Heart left ventricle (tissue), 16 donors: ENCODE measurements at regions of chr4 and their contacts with region 1.

Region 1: DNA sequence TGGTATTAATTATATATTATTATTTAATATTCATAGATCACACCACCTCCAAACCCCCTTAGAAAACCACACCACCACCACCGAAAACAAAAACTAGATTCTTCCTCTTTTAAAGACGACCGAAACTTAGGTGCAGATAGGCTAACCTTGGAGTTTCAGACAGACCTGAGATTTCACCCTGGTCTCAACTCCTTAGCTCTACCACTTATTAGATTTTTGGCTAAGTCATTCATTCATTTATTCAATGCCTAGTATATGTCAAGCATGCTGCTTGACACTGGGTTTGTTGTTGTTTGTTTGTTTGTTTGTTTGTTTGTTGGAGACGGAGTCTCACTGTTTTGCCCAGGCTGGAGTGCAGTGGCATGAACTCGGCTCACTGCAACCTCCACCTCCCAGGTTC is 9.5 kb upstream of the BMP2K start:
- DNase-seq: no peak
- ATAC-seq: no peak
- H3K4me3 ChIP-seq: no peak overlapping the region
- H3K27ac ChIP-seq: no peak overlapping the region
- H3K4me1 ChIP-seq: peaks cover 0 to 15% (median 5%) of the 10 kb centered on the region in 12 donors
- H3K27me3 ChIP-seq: no peaks in the 10 kb centered on the region
- CTCF ChIP-seq: no peak
- POLR2A ChIP-seq: no peak

Region 2: GRCh38 chr4:78622253-78622979 is 144.2 kb before region 1 on chr4:
- intact Hi-C with region 1: loop called in 2 of 10 experiments (anchors 5 to 10 kb)
- DNase-seq: no peak
- ATAC-seq: peak in 1 of 4 donors; percentile 39
- H3K4me3 ChIP-seq: no peak overlapping the region
- H3K27ac ChIP-seq: no peak overlapping the region
- H3K4me1 ChIP-seq: peaks cover 0 to 6% (median 0%) of the 10 kb centered on the region in 12 donors
- H3K27me3 ChIP-seq: no peaks in the 10 kb centered on the region
- CTCF ChIP-seq: no peak
- POLR2A ChIP-seq: no peak

Region 3: DNA sequence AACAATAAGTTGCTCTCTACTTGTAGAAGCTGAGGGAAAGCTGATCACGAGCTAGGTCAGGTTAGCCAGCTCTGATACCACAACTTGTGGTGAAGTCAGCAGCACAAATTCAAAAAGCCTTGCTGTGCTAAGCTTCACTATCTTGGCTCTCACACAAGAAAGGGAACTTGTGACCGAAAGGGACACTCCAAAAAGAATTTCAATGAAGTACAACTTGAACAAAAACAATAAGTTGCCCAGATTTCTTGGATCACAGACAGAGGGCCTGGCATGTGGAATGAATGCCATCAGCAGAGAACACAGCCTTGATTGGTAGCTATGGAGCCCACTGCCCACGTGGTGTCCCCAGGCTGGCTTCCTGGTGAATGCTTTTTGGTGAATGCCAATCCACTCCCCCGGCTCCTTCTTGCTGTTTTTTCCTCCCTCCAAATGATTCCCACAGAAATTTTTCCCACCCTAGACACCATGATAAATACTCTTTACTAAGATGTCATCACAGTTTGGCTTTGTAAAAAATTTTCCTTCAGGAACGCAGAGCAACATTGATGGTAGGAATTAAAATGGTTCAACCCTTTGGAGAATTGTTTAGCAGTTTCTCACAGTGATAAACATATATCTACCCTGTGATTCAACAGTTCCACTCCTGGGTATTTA is 132.5 kb before region 1 on chr4:
- intact Hi-C with region 1: loop called in 1 of 10 experiments (anchors 5 kb)
- DNase-seq: peak in 3 of 5 donors; percentile 22 to 42 (median 35)
- ATAC-seq: peak; percentile 54 to 90 (median 76)
- H3K4me3 ChIP-seq: no peak overlapping the region
- H3K27ac ChIP-seq: peak overlapping the region; percentile 1 to 74 (median 54)
- H3K4me1 ChIP-seq: peaks cover 0 to 59% (median 10%) of the 10 kb centered on the region in 12 donors
- H3K27me3 ChIP-seq: no peaks in the 10 kb centered on the region
- CTCF ChIP-seq: no peak
- POLR2A ChIP-seq: no peak

Region 4: GRCh38 chr4:78691971-78692821 is 74.5 kb before region 1 on chr4:
- intact Hi-C with region 1: loop called in 1 of 10 experiments (anchors 10 kb)
- DNase-seq: peak in 3 of 5 donors; percentile 29 to 46 (median 35)
- ATAC-seq: peak; percentile 85 to 95 (median 88)
- H3K4me3 ChIP-seq: no peak overlapping the region
- H3K27ac ChIP-seq: peak overlapping the region in 7 of 12 donors; percentile 9 to 67 (median 27)
- H3K4me1 ChIP-seq: peaks cover 0 to 26% (median 17%) of the 10 kb centered on the region in 12 donors
- H3K27me3 ChIP-seq: no peaks in the 10 kb centered on the region
- CTCF ChIP-seq: no peak
- POLR2A ChIP-seq: no peak